B cell (primary cell): ENCODE measurements at regions of chr20 and their contacts with region 1.

Region 1: GRCh38 chr20:2172305-2173175 is 70.9 kb downstream of the STK35 start:
- DNase-seq: peak; percentile 76
- ATAC-seq: peak; percentile 69
- H3K4me3 ChIP-seq: no peak overlapping the region
- H3K4me3 Mint-ChIP-seq: peak overlapping the region; percentile 18
- H3K27ac ChIP-seq: no peak overlapping the region
- H3K27ac Mint-ChIP-seq: no peak overlapping the region
- H3K4me1 ChIP-seq: peaks cover 0 to 3% of the 10 kb centered on the region in 2 donors
- H3K4me1 Mint-ChIP-seq: peaks cover 3% of the 10 kb centered on the region
- H3K27me3 ChIP-seq: peaks cover 0 to 6% (median 1%) of the 10 kb centered on the region in 4 experiments
- H3K27me3 Mint-ChIP-seq: peaks cover 32% of the 10 kb centered on the region
- CTCF ChIP-seq: peak; percentile 88

Region 2: GRCh38 chr20:1764136-1765033 is 408.2 kb before region 1 on chr20:
- CTCF ChIA-PET with region 1: interaction called, 111 read pairs
- POLR2A ChIA-PET with region 1: no interaction called
- intact Hi-C with region 1: loop called (anchors 1 kb)
- DNase-seq: peak; percentile 77
- ATAC-seq: peak; percentile 79
- H3K4me3 ChIP-seq: no peak overlapping the region
- H3K4me3 Mint-ChIP-seq: no peak overlapping the region
- H3K27ac ChIP-seq: no peak overlapping the region
- H3K27ac Mint-ChIP-seq: no peak overlapping the region
- H3K4me1 ChIP-seq: no peaks in the 10 kb centered on the region
- H3K4me1 Mint-ChIP-seq: peaks cover 1% of the 10 kb centered on the region
- H3K27me3 ChIP-seq: peaks cover 0 to 3% (median 0%) of the 10 kb centered on the region in 4 experiments
- H3K27me3 Mint-ChIP-seq: peaks cover 13% of the 10 kb centered on the region
- CTCF ChIP-seq: peak; percentile 87

Region 3: GRCh38 chr20:1792274-1792673 is 380.3 kb before region 1 on chr20:
- CTCF ChIA-PET with region 1: interaction called, 10 read pairs
- POLR2A ChIA-PET with region 1: no interaction called
- intact Hi-C with region 1: no loop called
- DNase-seq: no peak
- ATAC-seq: no peak
- H3K4me3 ChIP-seq: no peak overlapping the region
- H3K4me3 Mint-ChIP-seq: no peak overlapping the region
- H3K27ac ChIP-seq: no peak overlapping the region
- H3K27ac Mint-ChIP-seq: no peak overlapping the region
- H3K4me1 ChIP-seq: no peaks in the 10 kb centered on the region
- H3K4me1 Mint-ChIP-seq: no peaks in the 10 kb centered on the region
- H3K27me3 ChIP-seq: peaks cover 0 to 12% (median 0%) of the 10 kb centered on the region in 4 experiments
- H3K27me3 Mint-ChIP-seq: peaks cover 25% of the 10 kb centered on the region
- CTCF ChIP-seq: no peak

Region 4: GRCh38 chr20:2005831-2006426 is 166.6 kb before region 1 on chr20:
- CTCF ChIA-PET with region 1: interaction called, 23 read pairs
- POLR2A ChIA-PET with region 1: no interaction called
- intact Hi-C with region 1: loop called (anchors 1 kb)
- DNase-seq: peak; percentile 77
- ATAC-seq: no peak
- H3K4me3 ChIP-seq: no peak overlapping the region
- H3K4me3 Mint-ChIP-seq: no peak overlapping the region
- H3K27ac ChIP-seq: no peak overlapping the region
- H3K27ac Mint-ChIP-seq: no peak overlapping the region
- H3K4me1 ChIP-seq: no peaks in the 10 kb centered on the region
- H3K4me1 Mint-ChIP-seq: no peaks in the 10 kb centered on the region
- H3K27me3 ChIP-seq: peaks cover 0 to 30% (median 11%) of the 10 kb centered on the region in 4 experiments
- H3K27me3 Mint-ChIP-seq: peaks cover 45% of the 10 kb centered on the region
- CTCF ChIP-seq: no peak

Region 5: DNA sequence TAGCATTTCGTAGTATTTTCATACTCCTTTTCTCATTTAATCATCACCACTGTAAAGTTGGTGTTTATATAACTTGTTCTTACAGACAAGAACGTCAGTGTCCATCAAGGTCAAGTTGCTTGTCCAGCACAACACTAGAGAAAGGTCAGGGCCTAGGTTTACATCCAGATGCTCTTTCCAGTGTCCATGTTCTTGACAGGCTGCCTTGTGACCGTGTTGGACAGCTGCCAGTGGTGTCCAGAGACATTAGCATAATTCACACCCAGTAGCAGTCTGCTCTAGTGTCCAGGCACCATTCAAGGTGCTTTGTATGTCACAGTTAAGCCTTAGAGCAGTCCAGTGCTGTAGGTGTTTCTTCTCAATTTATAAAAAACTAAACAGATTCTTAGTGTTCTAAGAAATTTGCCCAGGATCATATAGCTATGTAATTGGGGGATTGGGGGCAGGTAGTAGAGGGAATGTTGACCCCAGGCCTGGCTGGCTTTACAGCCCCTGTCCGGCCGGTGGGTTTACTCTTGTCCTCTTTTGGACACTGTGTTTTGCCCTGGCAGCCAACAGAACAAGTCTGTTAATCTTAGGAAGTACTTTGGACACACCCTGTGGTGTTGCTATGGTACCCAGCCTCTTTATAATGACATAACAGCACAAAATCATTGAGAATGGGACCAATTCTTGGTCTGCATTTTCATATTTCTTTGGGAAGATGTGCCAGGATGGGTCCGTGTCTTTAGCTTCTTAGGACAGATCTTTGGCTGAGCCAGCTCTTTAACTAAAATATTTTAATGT is 62.9 kb before region 1 on chr20:
- CTCF ChIA-PET with region 1: interaction called, 4 read pairs
- POLR2A ChIA-PET with region 1: no interaction called
- intact Hi-C with region 1: loop called (anchors 5 kb)
- DNase-seq: no peak
- ATAC-seq: no peak
- H3K4me3 ChIP-seq: no peak overlapping the region
- H3K4me3 Mint-ChIP-seq: peak overlapping the region; percentile 20
- H3K27ac ChIP-seq: no peak overlapping the region
- H3K27ac Mint-ChIP-seq: no peak overlapping the region
- H3K4me1 ChIP-seq: peaks cover 46 to 59% of the 10 kb centered on the region in 2 donors
- H3K4me1 Mint-ChIP-seq: peaks cover 84% of the 10 kb centered on the region
- H3K27me3 ChIP-seq: no peaks in the 10 kb centered on the region
- H3K27me3 Mint-ChIP-seq: no peaks in the 10 kb centered on the region
- CTCF ChIP-seq: no peak

Region 6: DNA sequence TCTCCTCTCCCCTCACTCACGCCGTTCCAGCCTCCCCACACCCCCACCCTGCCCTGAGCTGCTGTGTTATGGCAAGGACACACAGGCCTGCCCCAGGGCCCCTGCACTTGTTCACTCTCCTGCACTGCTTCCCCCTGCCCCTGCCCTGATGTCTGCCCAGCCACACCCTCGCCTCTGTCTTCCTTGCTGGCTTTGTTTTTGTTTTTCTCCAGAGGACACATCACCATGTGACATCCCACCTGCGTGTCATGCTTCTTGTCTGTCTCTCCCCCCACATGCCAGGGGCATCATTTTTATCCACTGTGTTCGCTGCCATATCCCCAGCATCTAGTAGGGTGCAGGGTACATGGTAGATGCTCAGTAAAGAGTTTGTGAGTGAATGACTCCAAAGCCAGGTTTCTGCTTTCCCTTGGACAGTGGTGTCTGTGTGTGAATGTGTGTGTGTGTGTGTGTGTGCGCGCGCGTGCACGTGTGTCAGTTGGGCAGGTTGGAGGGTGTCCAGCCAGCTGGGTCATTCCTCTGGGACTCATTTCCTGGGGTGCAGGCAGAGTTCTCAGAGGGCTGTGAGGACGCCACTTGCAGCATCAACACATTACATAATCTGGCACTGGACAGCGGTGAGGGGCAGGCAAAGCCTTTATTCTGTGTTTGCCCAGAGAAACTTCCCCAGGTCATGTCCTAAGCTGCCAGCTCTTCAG is 10.3 kb before region 1 on chr20:
- CTCF ChIA-PET with region 1: interaction called, 11 read pairs
- POLR2A ChIA-PET with region 1: no interaction called
- intact Hi-C with region 1: no loop called
- DNase-seq: no peak
- ATAC-seq: no peak
- H3K4me3 ChIP-seq: no peak overlapping the region
- H3K4me3 Mint-ChIP-seq: no peak overlapping the region
- H3K27ac ChIP-seq: no peak overlapping the region
- H3K27ac Mint-ChIP-seq: no peak overlapping the region
- H3K4me1 ChIP-seq: no peaks in the 10 kb centered on the region
- H3K4me1 Mint-ChIP-seq: no peaks in the 10 kb centered on the region
- H3K27me3 ChIP-seq: no peaks in the 10 kb centered on the region
- H3K27me3 Mint-ChIP-seq: peaks cover 10% of the 10 kb centered on the region
- CTCF ChIP-seq: no peak